Breast epithelium (tissue), 4 donors: ENCODE measurements at regions of chr7 and their contacts with region 1.

Region 1: DNA sequence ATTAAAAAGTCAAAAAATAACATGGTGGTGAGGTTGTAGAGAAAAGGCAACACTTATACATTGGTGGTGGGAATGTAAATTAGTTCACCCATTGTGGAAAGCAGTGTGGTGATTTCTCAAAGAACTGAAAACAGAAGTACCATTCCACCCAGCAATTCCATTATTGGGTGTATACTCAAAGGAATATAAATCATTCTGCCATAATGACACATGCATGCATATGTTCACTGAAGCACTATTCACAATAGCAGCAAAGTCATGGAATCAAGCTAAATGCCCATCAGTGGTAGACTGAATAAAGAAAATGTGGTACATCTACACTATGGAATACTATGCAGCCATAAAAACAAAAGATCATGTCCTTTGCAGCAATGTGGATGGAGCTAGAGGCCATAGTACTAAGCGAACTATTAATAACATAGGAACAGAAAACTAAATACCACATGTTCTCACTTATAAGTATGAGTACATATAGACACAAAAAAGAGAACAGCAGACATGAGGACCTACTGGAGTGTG is 66.1 kb upstream of the MKLN1 start:
- DNase-seq: no peak
- H3K4me3 ChIP-seq: no peak overlapping the region
- H3K27ac ChIP-seq: no peak overlapping the region
- H3K4me1 ChIP-seq: no peaks in the 10 kb centered on the region
- H3K27me3 ChIP-seq: no peaks in the 10 kb centered on the region
- CTCF ChIP-seq: no peak
- POLR2A ChIP-seq: no peak

Region 2: DNA sequence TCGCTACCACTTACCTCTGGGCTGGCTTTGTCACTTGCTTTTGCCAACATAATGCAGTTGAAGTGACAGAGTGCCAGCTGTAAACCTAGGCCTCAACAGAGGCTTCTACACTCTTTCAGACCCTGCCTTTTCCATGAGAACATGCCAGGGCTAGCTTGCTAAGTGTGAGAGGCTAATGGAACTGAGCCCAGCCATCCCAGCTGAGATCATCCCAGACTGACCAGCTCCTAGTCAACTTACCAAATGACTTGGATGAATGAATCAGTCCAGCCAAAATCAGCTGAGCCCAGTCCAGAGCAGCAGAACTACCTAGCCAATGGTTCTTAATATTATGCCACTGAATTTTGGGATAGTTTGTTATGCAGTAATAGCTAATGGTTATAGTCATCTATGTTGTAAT is 31.5 kb after region 1 on chr7:
- intact Hi-C with region 1: no loop called
- DNase-seq: no peak
- H3K4me3 ChIP-seq: no peak overlapping the region
- H3K27ac ChIP-seq: peak overlapping the region; percentile 31 to 62
- H3K4me1 ChIP-seq: no peaks in the 10 kb centered on the region
- H3K27me3 ChIP-seq: no peaks in the 10 kb centered on the region
- CTCF ChIP-seq: no peak
- POLR2A ChIP-seq: no peak

Region 3: GRCh38 chr7:131305152-131305551 is 43.6 kb after region 1 on chr7:
- intact Hi-C with region 1: loop called (anchors 2 kb)
- DNase-seq: no peak
- H3K4me3 ChIP-seq: no peak overlapping the region
- H3K27ac ChIP-seq: no peak overlapping the region
- H3K4me1 ChIP-seq: no peaks in the 10 kb centered on the region
- H3K27me3 ChIP-seq: no peaks in the 10 kb centered on the region
- CTCF ChIP-seq: no peak
- POLR2A ChIP-seq: no peak

Region 4: GRCh38 chr7:131390275-131390674 is 128.7 kb after region 1 on chr7:
- intact Hi-C with region 1: no loop called
- DNase-seq: no peak
- H3K4me3 ChIP-seq: no peak overlapping the region
- H3K27ac ChIP-seq: no peak overlapping the region
- H3K4me1 ChIP-seq: no peaks in the 10 kb centered on the region
- H3K27me3 ChIP-seq: no peaks in the 10 kb centered on the region
- CTCF ChIP-seq: no peak
- POLR2A ChIP-seq: no peak

Region 5: DNA sequence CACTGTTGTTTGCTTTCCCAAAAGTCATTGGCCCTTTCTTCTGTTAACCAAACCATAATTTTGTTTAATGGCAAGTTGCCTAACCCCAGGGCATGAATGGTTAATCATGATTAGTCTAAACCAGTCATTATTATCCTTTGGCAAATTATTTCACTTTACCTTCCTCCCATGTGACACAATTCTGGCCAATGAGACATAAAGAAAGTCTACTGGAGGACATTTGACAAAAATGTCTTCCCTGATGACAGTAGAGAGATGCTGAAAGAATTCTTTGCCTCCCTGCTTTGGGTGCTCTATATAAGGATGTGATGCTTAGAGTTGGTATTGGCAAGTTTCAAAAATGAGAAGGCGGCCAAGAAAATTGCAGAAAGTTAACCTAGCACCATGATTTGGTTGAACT is 193.0 kb after region 1 on chr7:
- intact Hi-C with region 1: no loop called
- DNase-seq: no peak
- H3K4me3 ChIP-seq: no peak overlapping the region
- H3K27ac ChIP-seq: no peak overlapping the region
- H3K4me1 ChIP-seq: no peaks in the 10 kb centered on the region
- H3K27me3 ChIP-seq: no peaks in the 10 kb centered on the region
- CTCF ChIP-seq: no peak
- POLR2A ChIP-seq: no peak